ENCODE measurements at regions of chr7 and their contacts with region 1.

Region 1: DNA sequence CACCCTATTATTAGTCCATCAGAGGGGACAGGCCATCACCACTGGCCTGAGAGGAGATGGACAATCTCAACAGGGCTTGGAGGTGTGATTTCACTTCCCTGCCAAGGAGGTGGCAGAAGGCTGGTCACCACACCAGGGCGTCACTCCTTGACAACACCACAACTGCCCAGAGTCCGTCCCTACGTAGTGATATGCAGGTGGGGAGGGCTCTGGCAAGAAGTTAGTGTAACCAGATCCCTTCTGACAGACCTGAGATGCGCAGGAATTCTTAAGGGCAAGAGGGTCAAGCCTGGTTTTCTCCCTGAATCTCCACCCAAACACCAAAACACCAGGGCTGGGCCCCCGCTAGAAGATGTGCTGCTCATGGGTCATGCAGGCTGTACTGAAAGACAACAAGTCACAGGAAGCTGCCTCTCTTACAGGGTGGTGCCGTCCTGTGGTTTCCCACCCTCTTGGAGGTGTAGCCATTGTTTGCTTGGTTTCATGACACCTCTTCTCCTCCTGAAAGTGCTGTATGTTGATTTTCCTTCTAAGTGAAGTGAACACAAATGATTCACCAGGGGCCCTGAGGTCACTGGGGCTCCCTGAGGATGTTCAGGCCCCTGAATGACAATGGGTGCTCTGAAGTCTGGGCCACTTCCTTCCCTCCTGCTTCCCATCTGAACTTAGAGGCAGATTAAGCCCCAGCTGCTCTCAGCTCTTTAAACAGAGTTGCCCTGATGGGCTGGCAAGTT is 27.1 kb downstream of the ATXN7L1 start:
- DNase-seq: peak; percentile 74 to 82
- ATAC-seq: peak; percentile 89 to 97 (median 94)
- H3K4me3 ChIP-seq: no peak overlapping the region
- H3K4me3 Mint-ChIP-seq: peak overlapping the region; percentile 88
- H3K27ac ChIP-seq: peak overlapping the region; percentile 86
- H3K27ac Mint-ChIP-seq: peak overlapping the region; percentile 96 to 97
- H3K4me1 ChIP-seq: peaks cover 58% of the 10 kb centered on the region
- H3K4me1 Mint-ChIP-seq: peaks cover 80 to 84% of the 10 kb centered on the region in 2 donors
- H3K27me3 ChIP-seq: no peaks in the 10 kb centered on the region
- H3K27me3 Mint-ChIP-seq: no peaks in the 10 kb centered on the region
- CTCF ChIP-seq: no peak

Region 2: DNA sequence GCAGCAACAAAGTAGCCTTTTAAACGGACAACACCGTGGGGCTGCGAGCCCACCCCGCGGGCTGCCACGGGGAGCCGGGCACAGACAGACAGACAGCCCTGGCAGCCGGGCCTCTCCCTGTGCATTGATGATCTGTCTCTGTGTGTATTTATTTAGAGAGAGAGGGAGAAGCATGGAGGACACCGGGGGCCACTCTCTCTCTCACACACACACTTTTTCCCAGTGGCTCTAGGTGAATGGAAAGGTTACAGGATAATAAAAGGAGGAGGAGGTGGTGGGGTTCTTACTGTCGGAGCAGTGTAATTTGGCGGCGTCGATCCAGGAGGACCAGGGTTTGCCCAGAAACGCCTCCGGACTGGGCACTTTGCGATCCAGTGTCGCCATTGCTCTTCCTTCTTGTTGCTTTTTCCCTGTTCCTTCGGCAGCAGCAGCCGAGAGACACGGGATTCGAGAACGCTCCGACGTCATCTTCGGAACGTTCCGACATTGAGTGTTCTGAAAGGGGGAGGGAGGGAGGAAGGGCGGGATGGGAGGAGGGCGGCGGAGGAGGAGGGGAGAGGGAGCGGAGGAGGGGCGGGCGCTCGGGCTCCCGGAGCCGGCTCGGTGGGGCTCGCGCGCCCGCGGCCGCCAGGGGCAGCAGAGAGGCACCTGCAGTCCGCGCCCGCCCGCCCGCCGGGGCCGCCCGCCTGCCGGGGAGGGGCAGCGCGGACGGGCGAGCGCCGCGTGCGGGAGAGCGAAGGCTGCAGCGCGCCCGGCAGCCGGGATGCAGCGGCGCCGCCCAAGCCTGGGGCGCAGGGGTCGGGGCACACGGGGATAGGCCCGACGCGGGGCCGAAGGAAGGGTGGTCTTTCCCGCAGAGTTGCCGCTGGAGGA is 27.0 kb after region 1 on chr7 and contains the start of gene ATXN7L1:
- intact Hi-C with region 1: loop called (anchors 1 kb)
- DNase-seq: peak; percentile 90 to 95
- ATAC-seq: peak; percentile 97 to 99 (median 99)
- H3K4me3 ChIP-seq: peak within 1 kb of the TSS; percentile 81
- H3K4me3 Mint-ChIP-seq: peak within 1 kb of the TSS; percentile 98
- H3K27ac ChIP-seq: peak within 1 kb of the TSS; percentile 56
- H3K27ac Mint-ChIP-seq: peak within 1 kb of the TSS; percentile 85 to 96
- H3K4me1 ChIP-seq: peaks cover 31% of the 10 kb centered on the region
- H3K4me1 Mint-ChIP-seq: peaks cover 60 to 61% of the 10 kb centered on the region in 2 donors
- H3K27me3 ChIP-seq: no peaks in the 10 kb centered on the region
- H3K27me3 Mint-ChIP-seq: no peaks in the 10 kb centered on the region
- CTCF ChIP-seq: peak; percentile 32
- total RNA-seq, gene ATXN7L1: 37.5 to 48.6 (median 47.9) TPM

Region 3: DNA sequence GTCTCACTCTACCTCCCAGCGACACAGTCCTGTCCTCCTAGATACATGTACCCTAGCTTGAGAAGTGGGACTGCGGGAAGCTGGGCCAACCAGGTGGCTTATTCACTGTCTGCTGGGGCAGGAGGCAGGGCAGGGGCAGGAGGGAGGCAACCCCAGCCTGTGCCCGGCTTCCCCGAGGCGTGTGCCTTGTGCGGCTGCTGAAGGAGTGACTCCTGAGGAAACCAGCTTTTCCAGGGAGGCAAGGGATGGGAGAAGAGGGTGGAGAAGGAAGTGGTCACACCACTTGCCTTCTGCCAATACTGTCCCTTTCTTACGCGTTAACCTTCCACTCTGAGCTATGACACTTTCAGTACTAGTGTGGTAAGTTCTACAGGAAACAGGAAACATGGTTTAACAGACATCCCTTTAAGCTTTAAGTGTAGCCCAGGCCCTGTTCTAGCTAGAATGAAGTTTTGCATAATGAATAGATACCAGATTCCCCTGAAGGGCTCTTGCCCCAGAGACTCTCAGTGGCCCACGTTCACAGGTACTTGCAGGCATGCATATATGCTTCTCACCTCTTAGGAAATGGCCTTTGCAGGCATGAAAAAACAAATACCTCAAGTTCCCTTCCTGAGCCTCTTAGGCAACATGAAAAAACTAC is 222.2 kb after region 1 on chr7:
- intact Hi-C with region 1: no loop called
- DNase-seq: peak in 1 of 2 donors; percentile 77
- ATAC-seq: peak; percentile 96 to 99 (median 97)
- H3K4me3 ChIP-seq: peak overlapping the region; percentile 9
- H3K4me3 Mint-ChIP-seq: peak overlapping the region; percentile 73
- H3K27ac ChIP-seq: peak overlapping the region; percentile 88
- H3K27ac Mint-ChIP-seq: peak overlapping the region; percentile 83 to 86
- H3K4me1 ChIP-seq: peaks cover 59% of the 10 kb centered on the region
- H3K4me1 Mint-ChIP-seq: peaks cover 39 to 43% of the 10 kb centered on the region in 2 donors
- H3K27me3 ChIP-seq: no peaks in the 10 kb centered on the region
- H3K27me3 Mint-ChIP-seq: peaks cover 7 to 30% of the 10 kb centered on the region in 2 donors
- CTCF ChIP-seq: no peak

Region 4: DNA sequence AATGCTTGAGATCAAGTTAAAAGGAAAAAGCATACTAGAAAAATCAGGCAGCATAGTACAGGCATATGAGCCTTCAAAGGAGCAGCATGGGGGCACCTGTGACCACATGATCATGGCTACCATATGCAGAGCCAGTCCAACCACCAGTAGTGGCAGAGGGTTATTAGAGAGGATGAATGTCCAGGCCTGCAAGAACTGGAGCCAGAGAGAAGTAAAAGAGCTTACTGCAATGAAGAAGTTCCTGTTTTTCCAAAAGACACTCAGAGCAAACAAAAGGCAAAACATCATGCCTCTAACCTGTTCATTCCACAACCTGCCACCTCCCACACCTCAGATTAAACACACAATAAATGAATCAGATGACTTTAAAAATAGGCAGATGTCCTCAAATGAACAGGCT is 535.1 kb after region 1 on chr7:
- intact Hi-C with region 1: no loop called
- DNase-seq: no peak
- ATAC-seq: no peak
- H3K4me3 ChIP-seq: no peak overlapping the region
- H3K4me3 Mint-ChIP-seq: no peak overlapping the region
- H3K27ac ChIP-seq: no peak overlapping the region
- H3K27ac Mint-ChIP-seq: no peak overlapping the region
- H3K4me1 ChIP-seq: no peaks in the 10 kb centered on the region
- H3K4me1 Mint-ChIP-seq: no peaks in the 10 kb centered on the region
- H3K27me3 ChIP-seq: no peaks in the 10 kb centered on the region
- H3K27me3 Mint-ChIP-seq: peaks cover 0 to 13% of the 10 kb centered on the region in 2 donors
- CTCF ChIP-seq: no peak

Measured in natural killer cell (primary cell).